ENCODE measurements at regions of chr10 and their contacts with region 1.

Region 1: DNA sequence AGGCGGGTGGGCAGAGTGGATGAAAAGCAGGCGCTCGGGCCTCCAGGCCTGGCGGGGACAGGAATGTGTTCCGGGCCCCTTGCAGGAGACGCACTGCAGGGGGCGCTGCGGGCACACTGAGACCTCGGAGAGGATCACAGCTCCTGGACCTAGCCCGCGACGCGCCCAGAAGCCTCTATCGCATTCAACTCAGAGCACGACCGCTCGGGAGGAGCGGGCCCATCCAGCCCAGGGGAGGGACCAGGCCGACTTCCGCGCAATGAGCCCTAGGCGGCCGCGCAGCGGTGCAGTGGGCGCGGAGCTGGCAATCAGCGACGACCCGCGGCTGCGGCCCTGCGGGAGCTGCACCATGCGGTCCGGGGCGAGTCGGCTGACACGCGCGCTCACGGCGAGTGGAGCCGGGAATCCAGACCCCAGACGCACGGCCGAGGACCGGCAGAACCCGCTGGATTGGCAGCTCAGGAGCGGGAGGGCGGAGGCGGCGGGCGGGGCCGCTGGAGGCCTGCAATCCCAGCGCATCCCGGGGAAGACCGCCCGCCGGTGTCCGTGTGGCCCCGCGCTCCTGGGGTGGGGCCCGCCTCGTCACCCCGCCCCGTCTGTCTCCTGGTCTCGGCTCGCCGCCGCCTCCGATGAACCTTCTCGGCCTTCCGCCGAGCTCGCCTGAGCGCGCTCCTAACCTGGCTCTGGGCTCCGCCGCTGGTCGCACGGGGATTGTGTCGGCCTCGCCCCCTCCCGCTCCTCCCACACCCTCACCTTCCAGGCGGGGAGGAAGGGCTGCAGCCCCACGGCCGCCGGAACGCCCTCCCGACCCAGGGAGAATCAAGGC is 33.5 kb upstream of the GRID1 start:
- DNase-seq: peak; percentile 96
- H3K4me3 Mint-ChIP-seq: peak overlapping the region; percentile 82
- H3K27ac Mint-ChIP-seq: peak overlapping the region; percentile 91
- H3K4me1 Mint-ChIP-seq: peaks cover 28% of the 10 kb centered on the region
- H3K27me3 Mint-ChIP-seq: peaks cover 13% of the 10 kb centered on the region

Region 2: GRCh38 chr10:86355571-86356038 is 44.5 kb before region 1 on chr10:
- CTCF ChIA-PET with region 1: no interaction called
- POLR2A ChIA-PET with region 1: no interaction called
- DNase-seq: no peak
- H3K4me3 Mint-ChIP-seq: no peak overlapping the region
- H3K27ac Mint-ChIP-seq: no peak overlapping the region
- H3K4me1 Mint-ChIP-seq: no peaks in the 10 kb centered on the region
- H3K27me3 Mint-ChIP-seq: peaks cover 8% of the 10 kb centered on the region

Region 3: GRCh38 chr10:86389441-86390193 is 10.5 kb before region 1 on chr10:
- CTCF ChIA-PET with region 1: interaction called, 38 read pairs
- POLR2A ChIA-PET with region 1: interaction called, 6 read pairs
- DNase-seq: no peak
- H3K4me3 Mint-ChIP-seq: peak overlapping the region; percentile 62
- H3K27ac Mint-ChIP-seq: no peak overlapping the region
- H3K4me1 Mint-ChIP-seq: peaks cover 6% of the 10 kb centered on the region
- H3K27me3 Mint-ChIP-seq: peaks cover 42% of the 10 kb centered on the region

Region 4: DNA sequence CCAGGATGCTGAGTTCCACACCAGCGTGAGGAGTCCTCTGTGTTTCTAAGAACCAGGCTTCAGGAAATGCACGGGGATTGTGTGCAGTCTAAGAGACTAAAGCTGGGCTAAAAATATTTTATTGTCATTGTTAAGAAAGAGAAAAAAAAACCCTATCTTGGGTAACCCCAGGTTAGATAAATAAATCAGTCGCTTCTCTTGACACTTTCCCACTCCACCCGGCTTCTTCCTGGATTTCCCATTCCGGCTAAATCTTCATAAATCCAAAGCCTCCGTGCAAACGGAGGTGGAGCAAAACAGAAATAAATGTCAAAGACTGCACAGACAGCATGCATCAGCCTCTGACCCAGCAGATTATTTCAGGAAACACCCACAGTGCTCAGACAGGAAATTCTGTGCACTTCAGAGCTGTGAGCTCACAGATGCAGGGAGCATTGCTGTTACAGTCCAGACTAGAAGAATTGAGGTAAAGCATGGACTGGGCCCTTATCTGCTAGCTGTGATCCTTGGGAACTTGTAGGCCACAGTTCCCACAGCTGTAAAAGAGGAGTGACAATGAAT is 11.3 kb after region 1 on chr10:
- CTCF ChIA-PET with region 1: interaction called, 43 read pairs
- POLR2A ChIA-PET with region 1: interaction called, 13 read pairs
- DNase-seq: peak; percentile 50
- H3K4me3 Mint-ChIP-seq: peak overlapping the region; percentile 51
- H3K27ac Mint-ChIP-seq: peak overlapping the region; percentile 89
- H3K4me1 Mint-ChIP-seq: peaks cover 52% of the 10 kb centered on the region
- H3K27me3 Mint-ChIP-seq: no peaks in the 10 kb centered on the region

Region 5: GRCh38 chr10:86585037-86585725 is 185.1 kb after region 1 on chr10:
- CTCF ChIA-PET with region 1: interaction called, 60 read pairs
- POLR2A ChIA-PET with region 1: no interaction called
- DNase-seq: peak; percentile 76
- H3K4me3 Mint-ChIP-seq: no peak overlapping the region
- H3K27ac Mint-ChIP-seq: no peak overlapping the region
- H3K4me1 Mint-ChIP-seq: peaks cover 3% of the 10 kb centered on the region
- H3K27me3 Mint-ChIP-seq: no peaks in the 10 kb centered on the region

Measured in activated CD4-positive, alpha-beta T cell treated with anti-CD3 and anti-CD28 coated beads, Interleukin-2, amount 10 ng/mL, durations not matched to agents 7 days and 5 days (primary cell).